Activated CD8-positive, alpha-beta T cell treated with anti-CD3 and anti-CD28 coated beads for 36 hours (primary cell): ENCODE measurements at regions of chr10 and their contacts with region 1.

Region 1: DNA sequence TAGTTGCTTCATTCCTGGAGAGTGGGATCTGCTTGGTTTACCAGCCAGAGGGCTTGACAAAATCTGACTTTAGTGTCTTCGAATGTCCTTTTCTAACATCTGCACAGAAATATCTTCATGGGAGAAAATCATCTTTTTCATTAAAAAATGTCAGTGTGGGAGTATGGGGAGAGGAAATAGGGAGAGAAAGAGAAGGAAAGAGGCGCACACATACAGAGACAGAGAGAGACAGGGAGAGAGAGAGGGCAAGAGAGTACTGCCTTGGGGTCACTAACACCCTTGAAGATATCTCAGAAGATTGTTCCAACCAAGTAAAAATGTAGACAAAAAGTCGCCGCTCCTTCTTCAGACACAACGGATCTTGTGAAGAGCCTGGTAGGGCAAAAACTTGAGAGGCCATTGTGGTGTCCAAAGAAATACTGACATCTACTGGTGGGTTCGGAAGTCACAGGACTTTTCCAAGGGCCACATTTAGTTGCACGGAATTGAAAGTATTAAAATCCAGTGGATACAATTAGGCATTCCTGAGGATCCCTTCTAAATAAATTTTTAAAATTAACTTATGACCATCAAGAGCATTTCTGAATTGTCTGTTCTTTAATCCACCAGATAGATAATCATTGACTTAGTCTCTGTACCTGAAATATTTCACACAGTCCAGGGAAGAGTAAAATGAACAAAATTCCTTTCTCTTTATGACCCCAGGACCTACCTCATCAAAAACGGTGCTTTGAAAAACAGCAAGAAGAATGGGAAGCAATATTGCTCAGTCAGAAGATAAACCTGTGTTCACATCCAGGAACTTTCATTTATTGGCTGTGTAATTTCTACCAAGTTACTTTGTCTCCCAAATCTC is 29.7 kb downstream of the VIM start:
- DNase-seq: peak; percentile 64
- ATAC-seq: peak; percentile 86
- H3K4me3 Mint-ChIP-seq: peak overlapping the region; percentile 34
- H3K27ac Mint-ChIP-seq: peak overlapping the region; percentile 12
- H3K4me1 Mint-ChIP-seq: peaks cover 10% of the 10 kb centered on the region
- H3K27me3 Mint-ChIP-seq: peaks cover 1% of the 10 kb centered on the region
- CTCF ChIP-seq: peak; percentile 83

Region 2: GRCh38 chr10:16822726-16823360 is 434.9 kb before region 1 on chr10:
- CTCF ChIA-PET with region 1: interaction called, 11 read pairs
- POLR2A ChIA-PET with region 1: interaction called, 3 read pairs
- intact Hi-C with region 1: loop called (anchors 5 kb)
- DNase-seq: no peak
- ATAC-seq: no peak
- H3K4me3 Mint-ChIP-seq: no peak overlapping the region
- H3K27ac Mint-ChIP-seq: no peak overlapping the region
- H3K4me1 Mint-ChIP-seq: peaks cover 5% of the 10 kb centered on the region
- H3K27me3 Mint-ChIP-seq: no peaks in the 10 kb centered on the region
- CTCF ChIP-seq: no peak

Region 3: DNA sequence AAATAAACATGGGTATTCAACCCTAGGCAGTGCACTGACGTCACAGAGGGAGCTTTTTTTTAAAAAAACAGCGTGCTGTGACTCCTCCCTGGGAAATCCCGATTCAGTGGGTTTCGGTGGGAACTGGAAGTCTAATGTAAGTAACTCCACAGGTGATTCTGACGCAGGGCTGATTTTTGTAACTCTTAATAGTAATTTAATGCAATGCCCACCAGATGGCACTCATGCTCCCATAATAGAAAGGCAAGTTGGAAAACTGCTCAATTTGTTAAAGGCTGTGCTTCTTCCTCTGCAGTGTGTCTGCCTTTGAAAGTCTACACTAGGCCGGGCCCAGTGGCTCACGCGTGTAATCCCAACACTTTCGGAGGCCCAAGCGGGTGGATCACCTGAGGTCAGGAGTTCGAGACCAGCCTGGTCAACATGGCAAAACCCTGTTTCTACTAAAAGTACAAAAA is 429.6 kb before region 1 on chr10:
- CTCF ChIA-PET with region 1: interaction called, 11 read pairs
- POLR2A ChIA-PET with region 1: interaction called, 3 read pairs
- intact Hi-C with region 1: loop called (anchors 5 kb)
- DNase-seq: peak; percentile 66
- ATAC-seq: peak; percentile 95
- H3K4me3 Mint-ChIP-seq: no peak overlapping the region
- H3K27ac Mint-ChIP-seq: no peak overlapping the region
- H3K4me1 Mint-ChIP-seq: no peaks in the 10 kb centered on the region
- H3K27me3 Mint-ChIP-seq: no peaks in the 10 kb centered on the region
- CTCF ChIP-seq: peak; percentile 77

Region 4: GRCh38 chr10:16843252-16843870 is 414.3 kb before region 1 on chr10:
- CTCF ChIA-PET with region 1: interaction called, 9 read pairs
- POLR2A ChIA-PET with region 1: no interaction called
- intact Hi-C with region 1: loop called (anchors 1 kb)
- DNase-seq: no peak
- ATAC-seq: peak; percentile 49
- H3K4me3 Mint-ChIP-seq: no peak overlapping the region
- H3K27ac Mint-ChIP-seq: no peak overlapping the region
- H3K4me1 Mint-ChIP-seq: no peaks in the 10 kb centered on the region
- H3K27me3 Mint-ChIP-seq: no peaks in the 10 kb centered on the region
- CTCF ChIP-seq: peak; percentile 78

Region 5: DNA sequence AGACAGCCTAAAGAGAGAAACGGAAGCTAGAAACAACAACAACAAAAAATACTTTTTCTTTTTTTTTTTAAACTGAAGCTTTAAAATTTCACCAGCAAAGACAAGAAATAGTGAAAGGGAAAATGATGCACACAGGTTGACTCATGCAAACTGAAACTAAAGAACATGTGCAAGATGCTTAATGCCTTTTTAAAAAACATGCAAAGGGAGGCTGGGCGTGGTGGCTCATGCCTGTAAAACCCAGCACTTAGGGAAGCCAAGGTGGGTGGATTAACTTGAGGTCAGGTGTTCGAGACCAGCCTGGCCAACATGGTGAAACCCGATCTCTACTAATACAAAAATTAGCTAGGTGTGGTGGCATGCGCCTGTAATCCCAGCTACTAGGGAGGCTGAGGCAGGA is 112.9 kb before region 1 on chr10:
- CTCF ChIA-PET with region 1: no interaction called
- POLR2A ChIA-PET with region 1: no interaction called
- intact Hi-C with region 1: no loop called
- DNase-seq: peak; percentile 84
- ATAC-seq: peak; percentile 90
- H3K4me3 Mint-ChIP-seq: no peak overlapping the region
- H3K27ac Mint-ChIP-seq: peak overlapping the region; percentile 62
- H3K4me1 Mint-ChIP-seq: peaks cover 26% of the 10 kb centered on the region
- H3K27me3 Mint-ChIP-seq: no peaks in the 10 kb centered on the region
- CTCF ChIP-seq: no peak

Region 6: DNA sequence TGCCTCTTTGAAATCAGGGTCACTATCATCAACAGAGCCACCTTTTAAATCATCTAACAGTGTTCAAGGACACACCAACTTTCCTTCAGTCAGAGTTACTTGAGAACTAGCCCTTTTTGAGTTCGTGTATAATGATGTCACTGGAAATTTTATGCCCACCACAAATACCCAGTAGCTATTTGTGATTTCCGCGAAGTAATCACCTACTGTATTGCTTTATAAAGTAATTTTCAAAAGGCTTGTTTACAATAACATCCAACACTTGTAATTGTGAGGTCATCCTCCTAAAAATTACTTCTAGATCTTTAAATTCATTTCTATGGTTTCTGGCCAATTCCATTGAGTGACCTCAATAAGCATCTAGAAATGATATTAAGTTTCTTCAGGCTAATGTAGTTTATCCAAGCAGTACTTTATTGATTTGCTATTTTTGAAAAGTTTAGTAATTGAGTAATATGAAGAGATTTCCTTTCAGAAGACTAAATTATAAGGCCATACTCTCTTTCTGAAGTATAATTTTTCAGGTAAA is 69.0 kb before region 1 on chr10:
- CTCF ChIA-PET with region 1: no interaction called
- POLR2A ChIA-PET with region 1: no interaction called
- intact Hi-C with region 1: no loop called
- DNase-seq: no peak
- ATAC-seq: no peak
- H3K4me3 Mint-ChIP-seq: no peak overlapping the region
- H3K27ac Mint-ChIP-seq: no peak overlapping the region
- H3K4me1 Mint-ChIP-seq: peaks cover 7% of the 10 kb centered on the region
- H3K27me3 Mint-ChIP-seq: no peaks in the 10 kb centered on the region
- CTCF ChIP-seq: no peak